SK-N-SH (cell line): ENCODE measurements at regions of chr1 and their contacts with region 1.

Region 1: GRCh38 chr1:18820791-18821641 is 38.4 kb downstream of the TAS1R2 start:
- DNase-seq: peak; percentile 89
- H3K4me3 ChIP-seq: peak overlapping the region in 1 of 2 experiments; percentile 24; a peak in 1 of 4 replicates
- H3K27ac ChIP-seq: no peak overlapping the region
- H3K4me1 ChIP-seq: peaks cover 0 to 6% of the 10 kb centered on the region in 2 experiments; a peak in 1 of 4 replicates
- H3K27me3 ChIP-seq: no peaks in the 10 kb centered on the region
- CTCF ChIP-seq: peak; percentile 82
- EP300 ChIP-seq: no peak
- RAD21 ChIP-seq: peak; percentile 90

Region 2: DNA sequence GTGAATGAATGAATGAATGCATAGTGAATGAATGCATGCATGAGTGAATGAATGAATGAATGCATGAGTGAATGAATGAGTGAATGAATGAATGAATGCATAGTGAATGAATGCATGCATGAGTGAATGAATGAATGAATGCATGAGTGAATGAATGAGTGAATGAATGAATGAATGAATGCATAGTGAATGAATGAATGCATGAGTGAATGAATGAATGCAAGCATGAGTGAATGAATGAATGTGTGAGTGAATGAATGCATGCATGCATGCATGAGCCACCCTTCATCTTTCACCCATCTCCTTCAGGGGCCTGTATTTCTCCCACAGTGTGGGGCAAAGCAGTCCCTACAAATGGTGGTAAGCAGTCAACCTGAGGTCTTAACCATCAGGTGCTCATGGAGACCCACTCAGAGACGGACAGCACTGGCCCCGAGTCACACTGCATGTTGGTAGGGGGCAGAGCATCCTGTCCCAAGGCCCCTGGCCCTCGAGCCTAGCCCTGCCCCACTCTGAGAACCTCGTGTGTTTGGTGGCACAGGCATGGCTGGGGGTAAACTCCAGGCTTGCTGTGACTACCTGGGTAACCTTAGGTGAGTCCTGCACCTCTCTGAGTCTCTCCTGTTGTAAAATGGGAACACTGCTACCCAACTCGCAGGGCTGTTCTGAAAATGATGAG is 218.3 kb before region 1 on chr1:
- CTCF ChIA-PET with region 1: interaction called, 279 read pairs
- POLR2A ChIA-PET with region 1: interaction called, 3 read pairs
- DNase-seq: no peak
- H3K4me3 ChIP-seq: no peak overlapping the region
- H3K27ac ChIP-seq: no peak overlapping the region
- H3K4me1 ChIP-seq: peaks cover 0 to 10% of the 10 kb centered on the region in 2 experiments; a peak in 1 of 4 replicates
- H3K27me3 ChIP-seq: peaks cover 4% of the 10 kb centered on the region; the same call in 1 of the 2 replicates
- CTCF ChIP-seq: no peak
- EP300 ChIP-seq: no peak
- RAD21 ChIP-seq: no peak

Region 3: DNA sequence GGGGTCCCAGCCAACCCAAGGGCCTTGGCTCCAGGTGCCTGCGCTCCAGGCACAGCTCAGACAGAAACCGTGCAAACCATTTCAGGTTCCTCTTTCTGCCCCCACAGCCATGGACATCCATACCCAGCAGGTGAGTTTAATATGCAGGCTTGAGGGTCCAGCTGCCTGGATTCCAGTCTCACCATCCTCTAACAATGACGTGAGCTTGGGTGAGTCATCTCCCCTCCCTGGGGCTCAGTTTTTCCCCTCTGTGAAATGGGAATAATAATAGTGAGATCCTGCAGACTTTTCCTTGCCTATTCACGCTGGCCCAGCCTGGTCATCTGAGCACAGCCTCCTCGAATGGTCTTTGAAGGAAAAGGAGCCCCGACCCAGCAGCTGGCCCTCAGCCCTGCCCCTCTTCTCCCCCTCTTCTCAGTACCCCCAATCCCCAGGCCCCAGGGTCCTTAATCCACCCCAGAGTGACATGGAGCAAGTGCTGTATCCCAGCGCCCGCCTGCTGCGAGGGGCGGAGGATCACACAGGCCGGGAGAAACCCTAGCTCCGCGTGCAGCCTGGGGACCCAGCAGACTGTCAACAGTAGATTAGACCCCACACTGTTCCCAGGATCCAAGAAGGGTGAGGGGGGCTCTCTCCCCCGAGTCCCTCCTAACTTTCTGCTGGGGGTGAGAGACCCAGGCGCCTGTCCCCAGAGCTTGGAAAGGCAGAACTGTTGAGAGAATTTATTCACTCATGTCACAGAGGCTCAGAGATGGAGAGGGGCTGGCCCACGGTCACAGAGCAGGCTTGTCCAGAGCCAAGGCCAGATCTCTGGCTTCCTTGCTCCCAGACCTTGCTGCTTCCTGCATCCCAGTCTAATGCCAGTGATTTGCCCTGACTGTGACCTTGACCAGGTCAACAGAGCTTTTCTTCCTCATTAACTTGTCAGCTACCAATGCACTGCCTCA is 10.8 kb before region 1 on chr1:
- CTCF ChIA-PET with region 1: interaction called, 16 read pairs
- POLR2A ChIA-PET with region 1: no interaction called
- DNase-seq: no peak
- H3K4me3 ChIP-seq: no peak overlapping the region
- H3K27ac ChIP-seq: no peak overlapping the region
- H3K4me1 ChIP-seq: no peaks in the 10 kb centered on the region; a peak in 1 of 4 replicates
- H3K27me3 ChIP-seq: no peaks in the 10 kb centered on the region
- CTCF ChIP-seq: no peak
- EP300 ChIP-seq: no peak
- RAD21 ChIP-seq: no peak